ENCODE measurements at regions of chr3 and their contacts with region 1.

Region 1: GRCh38 chr3:13091898-13092611 is 18.8 kb upstream of the IQSEC1 start:
- DNase-seq: peak; percentile 86 to 89
- ATAC-seq: peak; percentile 75 to 89 (median 82)
- H3K4me3 ChIP-seq: peak overlapping the region in 5 of 10 donors; percentile 8 to 32 (median 13)
- H3K27ac ChIP-seq: peak overlapping the region in 6 of 10 donors; percentile 3 to 78 (median 37)
- H3K4me1 ChIP-seq: peaks cover 0 to 24% (median 15%) of the 10 kb centered on the region in 9 donors
- H3K27me3 ChIP-seq: no peaks in the 10 kb centered on the region
- CTCF ChIP-seq: peak; percentile 92 to 98 (median 97)

Region 2: GRCh38 chr3:13189639-13190377 is 97.8 kb after region 1 on chr3:
- intact Hi-C with region 1: loop called in 1 of 10 experiments (anchors 10 kb)
- DNase-seq: no peak
- ATAC-seq: peak in 6 of 8 donors; percentile 25 to 67 (median 44)
- H3K4me3 ChIP-seq: no peak overlapping the region
- H3K27ac ChIP-seq: peak overlapping the region in 1 of 10 donors; percentile 5
- H3K4me1 ChIP-seq: peaks cover 0 to 28% (median 7%) of the 10 kb centered on the region in 9 donors
- H3K27me3 ChIP-seq: peaks cover 0 to 7% (median 0%) of the 10 kb centered on the region in 7 donors
- CTCF ChIP-seq: no peak

Region 3: DNA sequence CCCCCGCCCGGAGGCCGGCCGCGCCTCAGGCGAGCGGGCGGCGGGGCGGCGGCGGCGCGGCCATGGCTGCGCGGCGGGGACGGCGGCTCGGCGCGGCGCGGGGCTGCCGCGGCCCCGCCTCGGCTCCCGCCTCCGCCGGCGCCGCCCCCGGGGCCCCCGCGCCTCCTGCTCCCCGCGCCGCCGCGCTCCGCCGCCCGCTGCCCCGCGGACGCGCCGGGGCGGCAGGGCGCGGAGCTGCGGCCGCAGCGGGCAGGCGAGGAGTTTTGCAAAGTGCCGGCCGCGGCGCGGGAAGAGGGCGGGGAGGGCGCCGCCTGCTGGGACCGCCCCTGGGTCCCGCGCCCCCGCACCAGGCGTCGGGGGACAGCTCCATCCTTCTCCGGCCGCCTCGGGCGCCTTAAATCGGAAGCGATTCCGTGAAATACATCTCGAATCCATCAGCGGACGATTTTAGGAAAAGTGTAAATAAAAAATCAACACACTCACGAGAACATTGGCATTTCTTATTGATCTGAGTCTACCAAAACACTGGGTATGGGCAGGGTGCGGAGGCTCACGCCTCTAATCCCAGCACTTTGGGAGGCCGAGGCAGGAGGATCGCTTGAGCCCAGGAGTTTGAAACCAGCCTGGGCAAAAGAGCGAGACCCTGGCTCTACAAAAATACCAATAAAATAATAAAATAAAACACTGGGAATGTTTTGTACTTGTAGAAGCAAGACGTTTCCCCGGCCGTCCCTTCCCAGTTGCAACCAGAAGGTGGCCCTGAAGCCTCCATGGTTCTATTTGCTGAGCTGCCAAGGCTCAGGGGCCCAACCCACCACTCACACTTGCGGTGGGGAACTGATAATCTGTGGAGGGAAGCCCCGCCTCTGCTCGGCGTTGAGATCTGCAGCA is 191.2 kb after region 1 on chr3:
- intact Hi-C with region 1: loop called in 6 of 10 experiments (anchors 2 to 10 kb)
- DNase-seq: peak in 1 of 2 donors; percentile 46
- ATAC-seq: peak in 2 of 8 donors; percentile 28 to 44
- H3K4me3 ChIP-seq: peak overlapping the region; percentile 25 to 80 (median 66)
- H3K27ac ChIP-seq: peak overlapping the region in 5 of 10 donors; percentile 44 to 91 (median 85)
- H3K4me1 ChIP-seq: peaks cover 0 to 29% (median 15%) of the 10 kb centered on the region in 9 donors
- H3K27me3 ChIP-seq: peaks cover 9 to 78% (median 51%) of the 10 kb centered on the region in 7 donors
- CTCF ChIP-seq: peak in 8 of 9 donors; percentile 11 to 55 (median 34)

Region 4: GRCh38 chr3:13288732-13289718 is 197.0 kb after region 1 on chr3:
- intact Hi-C with region 1: loop called in 5 of 10 experiments (anchors 5 to 10 kb)
- DNase-seq: no peak
- ATAC-seq: no peak
- H3K4me3 ChIP-seq: no peak overlapping the region
- H3K27ac ChIP-seq: no peak overlapping the region
- H3K4me1 ChIP-seq: no peaks in the 10 kb centered on the region
- H3K27me3 ChIP-seq: peaks cover 1 to 56% (median 42%) of the 10 kb centered on the region in 7 donors
- CTCF ChIP-seq: no peak